Activated CD4-positive, alpha-beta memory T cell treated with anti-CD3 and anti-CD28 coated beads for 36 hours (primary cell): ENCODE measurements at regions of chr10 and their contacts with region 1.

Region 1: GRCh38 chr10:78579995-78580394 is 488.8 kb upstream of the ZMIZ1 start:
- DNase-seq: no peak
- H3K4me3 Mint-ChIP-seq: no peak overlapping the region
- H3K27ac Mint-ChIP-seq: no peak overlapping the region
- H3K4me1 Mint-ChIP-seq: peaks cover 14% of the 10 kb centered on the region
- H3K27me3 Mint-ChIP-seq: no peaks in the 10 kb centered on the region

Region 2: DNA sequence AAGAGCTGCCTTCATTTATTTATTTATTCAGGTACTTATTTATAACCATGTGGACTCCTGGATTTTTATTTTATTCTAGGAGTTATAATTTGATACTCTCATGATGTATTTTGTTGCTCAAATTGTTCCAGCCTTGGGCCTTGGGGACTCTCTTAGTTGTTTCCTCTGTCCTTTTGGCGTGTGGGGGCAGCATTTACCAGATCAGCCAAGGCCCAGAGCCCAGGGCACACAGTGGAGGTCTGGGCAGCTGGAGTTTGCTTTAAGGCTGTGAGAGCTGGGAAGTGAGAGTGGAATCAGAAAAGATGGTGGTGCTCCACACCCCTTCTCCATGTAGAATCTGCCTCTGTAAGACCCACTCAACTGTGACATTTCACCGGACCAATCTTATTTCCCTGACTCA is 147.4 kb before region 1 on chr10:
- CTCF ChIA-PET with region 1: no interaction called
- POLR2A ChIA-PET with region 1: no interaction called
- intact Hi-C with region 1: no loop called
- DNase-seq: no peak
- H3K4me3 Mint-ChIP-seq: no peak overlapping the region
- H3K27ac Mint-ChIP-seq: no peak overlapping the region
- H3K4me1 Mint-ChIP-seq: no peaks in the 10 kb centered on the region
- H3K27me3 Mint-ChIP-seq: peaks cover 23% of the 10 kb centered on the region

Region 3: DNA sequence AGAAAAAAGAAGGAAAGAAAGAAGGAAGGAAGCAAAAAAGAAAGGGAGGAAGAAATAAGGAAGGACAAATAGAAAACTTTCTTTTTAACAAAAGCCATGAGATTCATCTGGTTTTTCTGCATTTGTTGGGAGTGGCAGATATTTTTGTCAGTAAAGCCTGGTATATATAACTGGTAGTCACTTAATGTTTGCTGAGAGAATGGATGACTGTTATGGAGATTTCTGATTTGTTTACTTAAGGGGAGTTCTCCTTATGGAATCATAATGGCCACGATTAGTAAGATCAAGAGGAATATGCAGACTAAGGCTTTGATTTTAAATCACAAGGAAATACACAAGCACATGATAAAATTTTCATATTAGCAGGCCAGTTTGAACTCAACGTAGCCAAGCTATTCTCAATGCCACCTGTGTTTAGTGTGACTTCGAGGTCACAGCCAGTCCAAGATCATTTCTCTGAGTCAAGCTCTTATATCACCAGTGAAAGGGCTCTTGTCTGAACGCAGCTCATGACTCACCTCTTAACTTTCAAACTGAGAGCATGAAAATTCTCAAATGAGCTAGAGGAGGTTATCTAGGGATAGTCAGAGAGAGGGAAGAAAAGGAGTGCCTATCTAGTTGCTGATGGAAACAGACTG is 43.7 kb after region 1 on chr10:
- CTCF ChIA-PET with region 1: no interaction called
- POLR2A ChIA-PET with region 1: no interaction called
- intact Hi-C with region 1: loop called (anchors 1 kb)
- DNase-seq: peak; percentile 16
- H3K4me3 Mint-ChIP-seq: no peak overlapping the region
- H3K27ac Mint-ChIP-seq: no peak overlapping the region
- H3K4me1 Mint-ChIP-seq: peaks cover 3% of the 10 kb centered on the region
- H3K27me3 Mint-ChIP-seq: peaks cover 5% of the 10 kb centered on the region

Region 4: DNA sequence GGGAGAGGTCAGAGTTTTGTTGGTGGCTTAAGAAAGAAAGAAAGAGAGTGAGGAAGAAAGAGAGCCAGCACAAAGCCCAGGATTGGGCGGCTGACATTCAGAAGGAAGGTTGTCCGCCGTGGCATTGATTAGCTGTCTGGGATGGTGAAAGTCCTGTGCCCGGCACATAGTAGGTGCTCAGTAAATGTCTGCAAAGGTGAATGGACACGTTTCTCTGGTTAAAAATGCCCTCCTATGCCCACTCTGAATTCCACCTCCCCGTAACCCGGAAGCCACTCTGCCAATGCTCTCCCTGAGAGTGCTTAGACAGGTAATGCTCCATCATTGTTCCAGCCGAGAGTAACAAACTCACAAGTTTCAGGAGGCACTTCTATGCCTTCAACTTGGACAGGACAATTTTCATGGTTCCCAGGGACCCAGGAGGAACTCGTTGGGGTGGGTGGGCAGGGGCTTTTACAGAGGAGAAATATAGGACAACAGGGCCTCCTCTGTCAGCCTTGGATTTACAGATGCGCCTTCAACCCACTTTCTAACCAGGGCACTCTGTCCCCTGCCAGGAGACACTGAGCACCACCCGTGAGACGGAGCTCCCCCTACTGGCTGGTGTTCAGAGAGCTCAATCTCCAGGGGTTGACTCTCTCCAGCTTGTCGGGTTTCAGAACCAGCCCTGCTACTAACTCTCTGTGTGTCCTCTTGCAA is 77.3 kb after region 1 on chr10:
- CTCF ChIA-PET with region 1: no interaction called
- POLR2A ChIA-PET with region 1: no interaction called
- intact Hi-C with region 1: loop called (anchors 1 kb)
- DNase-seq: peak; percentile 81
- H3K4me3 Mint-ChIP-seq: no peak overlapping the region
- H3K27ac Mint-ChIP-seq: no peak overlapping the region
- H3K4me1 Mint-ChIP-seq: no peaks in the 10 kb centered on the region
- H3K27me3 Mint-ChIP-seq: peaks cover 8% of the 10 kb centered on the region